ENCODE measurements at regions of chr14 and their contacts with region 1.

Region 1: DNA sequence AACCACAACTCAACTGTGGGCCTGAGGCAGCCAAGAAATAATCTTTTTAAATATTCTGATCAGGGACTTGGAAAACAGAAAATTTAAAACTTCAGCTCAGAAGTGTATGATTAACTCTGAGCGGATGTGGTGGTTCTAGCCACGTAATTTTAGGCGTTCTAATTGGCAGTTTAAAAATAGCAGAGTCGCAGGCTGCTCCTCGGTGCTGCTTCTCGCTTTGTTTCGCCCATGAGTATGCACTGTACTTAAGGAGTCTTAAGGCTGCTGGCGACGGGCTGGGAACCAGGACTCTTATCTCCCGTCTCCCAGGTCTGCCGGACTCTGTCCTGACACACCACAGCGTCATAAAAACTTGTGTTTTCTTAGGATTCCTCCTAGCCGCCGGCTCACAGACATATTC is 113.4 kb upstream of the PELI2 start:
- DNase-seq: peak; percentile 57
- H3K4me3 Mint-ChIP-seq: no peak overlapping the region
- H3K27ac Mint-ChIP-seq: no peak overlapping the region
- H3K4me1 Mint-ChIP-seq: peaks cover 36% of the 10 kb centered on the region
- H3K27me3 Mint-ChIP-seq: peaks cover 60% of the 10 kb centered on the region

Region 2: DNA sequence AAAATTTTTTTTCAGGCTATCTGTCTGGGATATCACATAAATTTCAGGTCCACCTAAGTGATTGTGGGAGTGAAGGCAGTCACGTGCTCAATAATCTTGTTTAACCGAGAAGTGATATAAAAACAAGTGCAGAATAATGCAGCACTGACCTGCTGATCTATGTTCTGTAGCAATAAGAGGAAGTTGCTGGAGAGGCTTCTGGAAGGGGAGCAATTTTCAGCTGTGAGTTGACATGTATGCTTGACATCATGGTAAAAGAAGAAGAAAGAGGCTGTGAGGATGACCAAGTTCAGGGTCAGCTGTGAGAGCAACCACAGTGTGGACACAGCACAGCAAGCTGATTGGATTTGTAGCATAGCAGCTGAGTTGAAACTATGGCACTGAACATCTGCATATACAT is 58.6 kb before region 1 on chr14:
- CTCF ChIA-PET with region 1: no interaction called
- intact Hi-C with region 1: no loop called
- DNase-seq: no peak
- H3K4me3 Mint-ChIP-seq: no peak overlapping the region
- H3K27ac Mint-ChIP-seq: no peak overlapping the region
- H3K4me1 Mint-ChIP-seq: no peaks in the 10 kb centered on the region
- H3K27me3 Mint-ChIP-seq: peaks cover 16% of the 10 kb centered on the region

Region 3: DNA sequence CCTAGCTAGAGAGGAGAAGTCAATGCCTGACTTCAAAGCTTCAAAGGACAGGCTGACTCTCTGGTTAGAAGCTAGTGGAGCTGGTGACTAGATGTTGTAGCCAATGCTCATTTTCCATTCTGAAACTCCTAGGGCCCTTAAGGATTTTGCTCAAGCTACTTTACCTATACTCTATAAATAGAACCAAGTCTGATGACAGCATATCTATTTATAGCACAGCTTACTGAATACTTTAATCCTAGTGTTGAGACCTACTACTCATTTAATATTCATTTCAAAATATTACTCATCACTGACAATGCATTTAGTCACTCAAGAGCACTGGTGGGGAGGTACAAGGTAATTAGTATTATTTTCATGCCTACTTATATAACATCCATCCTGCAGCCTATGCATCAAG is 23.8 kb before region 1 on chr14:
- CTCF ChIA-PET with region 1: no interaction called
- intact Hi-C with region 1: loop called (anchors 1 kb)
- DNase-seq: no peak
- H3K4me3 Mint-ChIP-seq: no peak overlapping the region
- H3K27ac Mint-ChIP-seq: no peak overlapping the region
- H3K4me1 Mint-ChIP-seq: peaks cover 9% of the 10 kb centered on the region
- H3K27me3 Mint-ChIP-seq: peaks cover 21% of the 10 kb centered on the region

Measured in activated naive CD4-positive, alpha-beta T cell treated with anti-CD3 and anti-CD28 coated beads for 36 hours (primary cell).